ENCODE measurements at regions of chr3 and their contacts with region 1.

Region 1: DNA sequence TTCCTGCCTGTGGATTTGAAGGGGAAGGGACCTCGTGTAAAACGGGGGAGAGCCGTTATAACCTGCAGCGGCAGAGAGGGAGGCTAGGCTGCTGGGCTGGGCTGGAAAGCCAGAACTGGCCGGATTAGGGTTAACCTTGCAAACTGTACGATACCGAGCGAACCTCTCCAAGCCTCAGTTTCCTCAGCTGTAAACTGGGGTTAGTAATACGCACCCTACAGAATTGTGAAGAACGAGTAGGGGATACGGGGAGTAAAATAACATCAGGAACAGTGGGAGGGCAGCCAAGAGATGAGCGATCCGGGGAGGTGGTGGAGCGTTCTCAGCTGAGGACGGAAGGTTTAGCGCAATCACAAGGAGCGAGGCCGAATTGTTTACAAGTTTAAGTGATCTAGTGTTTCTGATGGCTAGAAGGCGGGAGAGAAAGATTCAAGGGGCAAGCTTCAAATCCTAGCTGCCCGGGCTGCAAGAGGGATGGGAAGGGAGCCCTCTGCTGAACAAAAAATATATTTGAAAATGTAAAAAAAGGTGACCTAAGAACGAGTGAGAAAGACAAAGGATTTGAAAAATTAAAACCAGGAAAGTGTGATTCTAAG is 768 bp upstream of the SEMA5B start:
- DNase-seq: peak; percentile 84
- H3K4me3 ChIP-seq: peak overlapping the region; percentile 40
- H3K27ac ChIP-seq: no peak overlapping the region
- H3K4me1 ChIP-seq: peaks cover 18% of the 10 kb centered on the region
- H3K27me3 ChIP-seq: peaks cover 75% of the 10 kb centered on the region
- CTCF ChIP-seq: peak; percentile 64

Region 2: GRCh38 chr3:122392868-122393844 is 635.2 kb before region 1 on chr3:
- CTCF ChIA-PET with region 1: no interaction called
- POLR2A ChIA-PET with region 1: no interaction called
- intact Hi-C with region 1: loop called (anchors 2 kb)
- DNase-seq: peak; percentile 75
- H3K4me3 ChIP-seq: no peak overlapping the region
- H3K27ac ChIP-seq: peak overlapping the region; percentile 12
- H3K4me1 ChIP-seq: peaks cover 38% of the 10 kb centered on the region
- H3K27me3 ChIP-seq: no peaks in the 10 kb centered on the region
- CTCF ChIP-seq: peak; percentile 79

Region 3: GRCh38 chr3:122754929-122755328 is 273.4 kb before region 1 on chr3:
- CTCF ChIA-PET with region 1: interaction called, 3 read pairs
- POLR2A ChIA-PET with region 1: no interaction called
- intact Hi-C with region 1: loop called (anchors 2 kb)
- DNase-seq: peak; percentile 58
- H3K4me3 ChIP-seq: no peak overlapping the region
- H3K27ac ChIP-seq: no peak overlapping the region
- H3K4me1 ChIP-seq: peaks cover under 1% of the 10 kb centered on the region
- H3K27me3 ChIP-seq: no peaks in the 10 kb centered on the region
- CTCF ChIP-seq: peak; percentile 81

Region 4: GRCh38 chr3:122942937-122943827 is 85.1 kb before region 1 on chr3:
- CTCF ChIA-PET with region 1: interaction called, 3 read pairs
- POLR2A ChIA-PET with region 1: no interaction called
- intact Hi-C with region 1: loop called (anchors 1 kb)
- DNase-seq: peak; percentile 66
- H3K4me3 ChIP-seq: no peak overlapping the region
- H3K27ac ChIP-seq: no peak overlapping the region
- H3K4me1 ChIP-seq: peaks cover 37% of the 10 kb centered on the region
- H3K27me3 ChIP-seq: peaks cover 31% of the 10 kb centered on the region
- CTCF ChIP-seq: peak; percentile 87

Region 5: DNA sequence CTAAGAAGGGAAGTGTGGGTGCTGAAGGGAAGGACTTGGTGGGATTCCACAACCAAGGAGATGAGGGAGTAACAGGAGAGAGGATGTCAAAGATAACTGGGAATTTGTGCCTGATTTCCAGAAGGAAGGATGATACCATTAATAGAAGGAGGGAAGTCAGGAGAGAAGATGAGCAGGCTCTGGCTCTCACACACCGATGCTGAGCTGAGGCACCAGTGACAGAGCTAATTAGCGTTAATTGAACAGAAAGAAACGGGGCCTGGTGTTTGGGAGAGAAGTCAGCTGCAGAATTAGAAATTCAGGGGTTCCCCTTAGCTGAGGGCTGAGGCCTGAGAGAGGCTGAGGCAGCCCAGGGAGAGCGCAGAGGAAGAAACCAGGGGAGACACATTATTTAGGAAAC is 26.6 kb after region 1 on chr3:
- CTCF ChIA-PET with region 1: no interaction called
- POLR2A ChIA-PET with region 1: no interaction called
- intact Hi-C with region 1: no loop called
- DNase-seq: no peak
- H3K4me3 ChIP-seq: no peak overlapping the region
- H3K27ac ChIP-seq: no peak overlapping the region
- H3K4me1 ChIP-seq: no peaks in the 10 kb centered on the region
- H3K27me3 ChIP-seq: no peaks in the 10 kb centered on the region
- CTCF ChIP-seq: no peak

Measured in A673 (cell line).